Activated CD4-positive, alpha-beta T cell treated with anti-CD3 and anti-CD28 coated beads for 36 hours (primary cell): ENCODE measurements at regions of chr2 and their contacts with region 1.

Region 1: GRCh38 chr2:73233154-73233931 is at the start of gene PRADC1:
- DNase-seq: peak; percentile 96
- ATAC-seq: peak; percentile 89
- H3K4me3 Mint-ChIP-seq: peak within 1 kb of the TSS; percentile 92
- H3K27ac Mint-ChIP-seq: peak within 1 kb of the TSS; percentile 98
- H3K4me1 Mint-ChIP-seq: peaks cover 32% of the 10 kb centered on the region
- H3K27me3 Mint-ChIP-seq: no peaks in the 10 kb centered on the region
- total RNA-seq, gene PRADC1: 11.8 to 12.1 TPM

Region 2: GRCh38 chr2:73112913-73113633 is 120.3 kb before region 1 on chr2 and contains the start of gene RAB11FIP5:
- CTCF ChIA-PET with region 1: no interaction called
- POLR2A ChIA-PET with region 1: interaction called, 3 read pairs
- intact Hi-C with region 1: loop called in 1 of 2 experiments (anchors 1 kb)
- DNase-seq: peak; percentile 87
- ATAC-seq: peak; percentile 84
- H3K4me3 Mint-ChIP-seq: peak within 1 kb of the TSS; percentile 79
- H3K27ac Mint-ChIP-seq: peak within 1 kb of the TSS; percentile 40
- H3K4me1 Mint-ChIP-seq: peaks cover 23% of the 10 kb centered on the region
- H3K27me3 Mint-ChIP-seq: peaks cover 2% of the 10 kb centered on the region
- total RNA-seq, gene RAB11FIP5: 16.4 to 16.5 TPM

Region 3: GRCh38 chr2:73268830-73269685 is 35.7 kb after region 1 on chr2:
- CTCF ChIA-PET with region 1: interaction called, 4 read pairs
- POLR2A ChIA-PET with region 1: no interaction called
- intact Hi-C with region 1: loop called in 1 of 2 experiments (anchors 1 kb)
- DNase-seq: peak; percentile 86
- ATAC-seq: peak; percentile 95
- H3K4me3 Mint-ChIP-seq: peak overlapping the region; percentile 18
- H3K27ac Mint-ChIP-seq: no peak overlapping the region
- H3K4me1 Mint-ChIP-seq: peaks cover 21% of the 10 kb centered on the region
- H3K27me3 Mint-ChIP-seq: no peaks in the 10 kb centered on the region

Region 4: DNA sequence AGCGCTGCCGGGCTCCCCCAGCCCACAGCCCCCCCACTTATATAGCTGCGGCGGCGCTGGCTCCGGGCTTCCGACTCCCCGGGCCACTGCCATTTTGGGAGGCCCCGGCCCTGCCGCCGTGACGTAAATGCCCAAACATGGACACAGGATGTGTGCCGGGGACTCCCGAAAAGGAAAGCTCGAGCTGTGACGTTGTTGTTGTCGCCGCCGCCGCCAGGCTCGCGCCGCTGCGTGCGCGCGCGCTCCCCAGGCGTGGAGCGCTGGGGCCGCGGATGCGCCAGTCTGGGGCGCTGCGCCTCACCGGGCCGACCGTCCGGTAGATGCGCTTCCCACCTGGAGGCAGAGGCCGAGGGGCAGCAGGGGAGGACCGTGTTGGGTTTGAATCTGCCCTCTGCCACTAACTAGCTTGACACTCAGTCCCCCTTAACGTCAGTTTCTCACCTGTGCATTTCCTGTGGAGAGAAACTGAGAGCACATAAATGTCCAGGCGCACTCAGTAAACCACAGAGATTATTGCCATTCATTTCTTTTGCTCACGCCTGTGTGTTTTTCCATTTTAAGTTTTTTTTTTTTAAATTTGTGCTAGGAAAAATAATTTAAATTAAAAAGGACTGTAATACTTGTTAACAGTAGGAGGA is 60.3 kb after region 1 on chr2 and contains the start of gene EGR4:
- CTCF ChIA-PET with region 1: interaction called, 33 read pairs
- POLR2A ChIA-PET with region 1: interaction called, 9 read pairs
- intact Hi-C with region 1: loop called (anchors 1 kb)
- DNase-seq: peak; percentile 95
- ATAC-seq: peak; percentile 96
- H3K4me3 Mint-ChIP-seq: peak within 1 kb of the TSS; percentile 68
- H3K27ac Mint-ChIP-seq: no peak within 1 kb of the TSS
- H3K4me1 Mint-ChIP-seq: peaks cover 12% of the 10 kb centered on the region
- H3K27me3 Mint-ChIP-seq: peaks cover 65% of the 10 kb centered on the region
- total RNA-seq, gene EGR4: 0.18 to 0.41 TPM

Region 5: GRCh38 chr2:74198461-74199274 is 965.3 kb after region 1 on chr2 and contains the start of gene MTHFD2:
- CTCF ChIA-PET with region 1: no interaction called
- POLR2A ChIA-PET with region 1: no interaction called
- intact Hi-C with region 1: loop called in 1 of 2 experiments (anchors 1 kb)
- DNase-seq: peak; percentile 96
- ATAC-seq: peak; percentile 90
- H3K4me3 Mint-ChIP-seq: peak within 1 kb of the TSS; percentile 100
- H3K27ac Mint-ChIP-seq: peak within 1 kb of the TSS; percentile 100
- H3K4me1 Mint-ChIP-seq: peaks cover 40% of the 10 kb centered on the region
- H3K27me3 Mint-ChIP-seq: no peaks in the 10 kb centered on the region
- total RNA-seq, gene MTHFD2: 411 to 453 TPM